Dorsolateral prefrontal cortex (tissue), 120 donors: ENCODE measurements at regions of chr1 and their contacts with region 1.

Region 1: GRCh38 chr1:200510228-200510623 is 100.4 kb upstream of the ZNF281 start:
- DNase-seq: peak in 8 of 10 donors; percentile 52 to 81 (median 70)
- H3K4me3 ChIP-seq: no peak overlapping the region
- H3K27ac ChIP-seq: no peak overlapping the region
- H3K27me3 ChIP-seq: peaks cover 0 to 5% (median 0%) of the 10 kb centered on the region in 45 donors
- CTCF ChIP-seq: peak; percentile 89 to 99 (median 96)

Region 2: DNA sequence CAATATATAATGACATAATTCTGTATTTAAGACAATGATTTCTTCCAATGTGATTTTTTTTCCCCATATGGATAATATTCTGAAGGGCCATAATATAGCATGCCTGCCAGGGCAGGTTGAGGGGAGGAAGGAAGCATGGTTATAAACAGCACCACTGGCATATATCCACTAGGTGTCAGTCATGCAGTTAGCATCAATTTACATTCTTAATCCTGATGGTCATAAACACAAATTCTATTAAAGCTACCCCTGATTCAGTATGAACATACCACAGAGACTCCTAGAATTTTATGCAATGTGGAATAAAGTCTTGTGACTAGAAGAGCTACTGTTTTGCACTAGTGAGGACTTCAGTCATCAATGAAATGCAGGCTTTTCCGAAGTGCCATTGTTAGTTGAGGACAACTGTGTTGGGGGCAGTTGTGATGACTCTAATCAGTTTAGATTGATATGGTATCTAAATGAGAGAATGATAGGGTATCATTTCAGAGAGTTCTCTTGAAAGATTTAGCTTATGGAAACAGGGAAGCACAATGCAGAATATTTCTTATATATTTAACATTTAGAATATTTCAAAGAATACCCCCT is 825.4 kb before region 1 on chr1:
- intact Hi-C with region 1: loop called (anchors 5 to 10 kb)
- DNase-seq: peak in 1 of 10 donors; percentile 14
- H3K4me3 ChIP-seq: no peak overlapping the region
- H3K27ac ChIP-seq: no peak overlapping the region
- H3K27me3 ChIP-seq: peaks cover 0 to 8% (median 0%) of the 10 kb centered on the region in 45 donors
- CTCF ChIP-seq: peak; percentile 57 to 89 (median 79)

Region 3: DNA sequence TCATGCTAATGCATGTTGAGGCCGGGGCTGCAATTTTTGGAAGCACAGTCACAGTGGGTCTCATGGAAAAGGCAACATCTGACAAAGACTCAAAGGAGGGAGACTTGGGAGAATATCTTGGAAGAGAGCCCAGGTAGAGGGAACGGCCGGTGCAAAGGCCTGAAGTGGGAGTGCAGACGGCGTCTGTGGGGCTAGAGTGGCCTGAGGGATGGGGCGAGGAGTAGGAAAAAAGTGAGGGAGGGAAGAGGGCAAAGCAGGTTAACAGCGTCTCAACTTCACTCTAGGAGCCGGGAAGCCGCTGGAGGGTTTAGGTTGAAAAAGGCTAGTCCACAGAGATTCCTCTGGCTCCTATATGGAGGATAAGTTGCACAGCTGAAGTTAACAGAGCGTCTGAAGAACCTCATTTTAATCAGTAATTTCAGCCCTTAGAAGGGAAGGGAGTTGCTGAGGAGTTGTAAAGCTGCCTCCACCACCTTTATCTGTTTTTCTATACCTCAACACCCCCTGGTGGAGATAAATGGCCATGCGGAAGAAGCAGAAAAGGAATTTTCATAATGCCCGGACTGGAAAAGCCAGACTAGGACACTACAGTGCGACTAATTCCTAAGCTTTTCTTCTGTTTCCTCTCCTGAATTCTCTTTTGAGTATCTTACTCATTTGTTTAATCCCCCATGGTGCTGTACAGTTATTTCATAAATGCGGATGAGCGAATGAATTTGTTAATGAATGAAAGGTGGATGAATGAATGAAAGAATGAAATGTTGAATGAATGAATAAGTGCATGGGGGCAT is 21.7 kb before region 1 on chr1:
- intact Hi-C with region 1: no loop called
- DNase-seq: peak in 5 of 10 donors; percentile 7 to 61 (median 44)
- H3K4me3 ChIP-seq: peak overlapping the region in 28 of 59 donors; percentile 4 to 56 (median 30)
- H3K27ac ChIP-seq: no peak overlapping the region
- H3K27me3 ChIP-seq: peaks cover 0 to 12% (median 0%) of the 10 kb centered on the region in 45 donors
- CTCF ChIP-seq: peak; percentile 58 to 98 (median 90)